ENCODE measurements at regions of chr11 and their contacts with region 1.

Region 1: DNA sequence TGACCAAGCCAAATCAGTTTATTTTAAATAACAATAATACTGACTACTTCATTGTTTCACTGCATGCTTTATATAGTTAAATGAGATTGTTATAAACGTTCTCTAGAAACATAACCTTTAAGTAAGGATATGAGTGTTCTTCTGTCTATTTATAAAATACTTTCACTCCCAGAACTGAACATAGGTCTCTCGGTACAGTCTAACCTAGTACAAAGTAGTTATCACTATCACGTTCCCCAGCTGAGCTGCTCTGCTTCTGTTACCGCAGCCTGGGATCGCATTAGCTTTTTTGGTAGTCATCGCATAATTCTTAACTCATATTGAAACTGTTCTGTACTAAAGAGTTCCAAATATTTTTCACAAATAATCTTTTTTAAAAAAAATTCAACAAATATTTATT is 143.6 kb downstream of the WNT11 start:
- DNase-seq: no peak

Region 2: DNA sequence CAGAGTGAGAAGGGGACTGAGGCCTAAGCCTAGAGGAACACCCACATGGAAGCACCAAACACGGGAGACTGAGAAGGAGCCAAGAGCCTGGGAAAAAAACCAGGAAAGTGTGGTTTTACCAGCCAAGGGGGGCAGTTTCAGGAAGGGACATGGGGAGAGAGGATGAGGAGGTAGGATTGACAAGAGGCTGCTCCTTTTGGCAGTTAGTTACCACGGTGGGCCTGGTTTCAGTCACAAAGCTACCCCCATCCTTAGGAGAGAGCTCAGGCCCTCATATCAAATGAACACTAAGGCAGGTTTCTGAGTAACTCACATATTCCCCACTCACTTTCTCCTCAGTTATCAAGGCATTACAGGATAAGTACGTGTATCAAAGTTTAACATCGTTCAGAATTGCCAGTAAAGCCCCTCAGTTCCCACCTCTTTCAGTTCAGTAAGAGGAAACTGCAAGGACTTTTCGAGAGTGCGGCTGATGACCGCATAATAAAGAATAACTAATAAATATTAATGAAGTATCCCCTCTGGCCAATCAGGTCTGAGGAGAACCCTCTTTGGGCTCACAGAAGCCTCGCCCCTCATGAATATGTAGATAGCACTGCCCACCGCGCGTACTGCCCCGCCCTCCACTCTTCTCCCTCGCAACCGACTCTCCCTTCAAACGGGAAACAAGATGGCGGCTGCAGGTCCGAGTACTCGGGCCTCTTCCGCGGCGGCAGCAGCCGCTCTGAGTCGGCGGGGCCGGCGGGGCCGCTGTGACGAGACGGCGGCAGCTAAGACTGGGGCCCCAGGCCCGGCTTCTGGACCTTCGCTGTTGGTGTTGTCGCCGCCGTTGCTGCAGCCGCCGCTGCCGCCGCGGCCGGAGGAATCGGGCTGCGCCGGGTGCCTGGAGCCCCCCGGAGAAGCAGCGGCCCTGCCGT is 1314.3 kb before region 1 on chr11 and contains the start of gene RNF169:
- intact Hi-C with region 1: loop called in 1 of 2 experiments (anchors 5 kb)
- DNase-seq: peak; percentile 98
- total RNA-seq, gene RNF169: 14.7 to 19.8 TPM

Region 3: DNA sequence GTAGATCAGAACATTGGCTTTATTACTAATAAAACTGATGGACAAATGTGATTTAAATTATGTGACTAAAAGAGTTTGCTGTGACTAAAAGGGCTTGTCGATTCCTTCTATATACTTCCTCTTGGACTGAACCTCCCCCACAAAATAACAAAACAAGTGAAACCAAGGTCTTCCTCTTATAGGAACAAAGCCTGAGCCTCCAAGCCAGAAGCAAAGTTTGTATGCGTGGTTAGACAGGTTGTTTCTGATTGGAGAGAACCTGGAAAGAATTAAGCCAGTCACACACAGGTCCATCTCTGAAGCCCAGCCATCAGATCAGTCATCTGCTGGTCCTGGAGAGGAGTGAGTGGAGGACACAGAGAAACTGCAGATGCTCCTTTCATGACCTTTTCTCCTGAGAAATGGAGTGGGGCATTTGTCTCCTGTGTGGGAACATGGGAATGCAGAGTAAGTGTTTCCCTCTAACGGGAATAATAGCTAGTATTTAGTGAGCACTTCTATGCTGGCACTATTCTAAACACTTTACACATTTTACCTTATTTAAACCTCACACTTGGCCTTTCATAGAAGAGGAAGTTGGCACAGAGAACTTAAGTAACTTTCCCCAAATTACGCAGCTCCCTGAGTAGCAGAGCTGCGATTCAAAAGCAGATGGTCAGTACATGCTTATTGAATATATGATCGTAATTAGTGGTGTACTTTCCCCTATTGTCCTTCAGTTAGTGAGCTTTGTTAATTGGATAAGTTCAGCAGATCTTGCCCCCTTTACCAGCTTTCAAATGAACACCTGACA is 170.6 kb before region 1 on chr11:
- intact Hi-C with region 1: no loop called
- DNase-seq: no peak

Region 4: DNA sequence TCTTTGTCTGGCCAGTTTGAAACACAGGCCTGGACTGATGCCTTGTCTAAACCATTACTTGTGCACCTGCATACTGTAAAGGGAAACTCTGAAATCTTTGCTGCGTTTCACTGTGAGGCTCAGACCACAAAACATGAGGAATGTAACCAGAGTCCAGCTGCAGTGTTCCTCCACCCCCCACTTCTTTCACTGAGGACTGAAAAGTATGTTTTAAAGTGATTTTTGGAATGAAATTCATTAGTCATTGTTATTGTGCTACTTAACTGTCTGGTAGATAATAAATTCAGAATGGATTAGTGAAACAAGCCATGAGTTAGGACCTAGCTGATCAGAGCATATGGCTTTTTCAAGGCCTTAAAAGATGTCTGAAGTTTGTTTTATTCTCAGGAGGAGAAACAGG is 37.7 kb before region 1 on chr11:
- intact Hi-C with region 1: no loop called
- DNase-seq: no peak

Region 5: GRCh38 chr11:76120513-76121101 is 57.9 kb after region 1 on chr11:
- intact Hi-C with region 1: no loop called
- DNase-seq: no peak

Region 6: DNA sequence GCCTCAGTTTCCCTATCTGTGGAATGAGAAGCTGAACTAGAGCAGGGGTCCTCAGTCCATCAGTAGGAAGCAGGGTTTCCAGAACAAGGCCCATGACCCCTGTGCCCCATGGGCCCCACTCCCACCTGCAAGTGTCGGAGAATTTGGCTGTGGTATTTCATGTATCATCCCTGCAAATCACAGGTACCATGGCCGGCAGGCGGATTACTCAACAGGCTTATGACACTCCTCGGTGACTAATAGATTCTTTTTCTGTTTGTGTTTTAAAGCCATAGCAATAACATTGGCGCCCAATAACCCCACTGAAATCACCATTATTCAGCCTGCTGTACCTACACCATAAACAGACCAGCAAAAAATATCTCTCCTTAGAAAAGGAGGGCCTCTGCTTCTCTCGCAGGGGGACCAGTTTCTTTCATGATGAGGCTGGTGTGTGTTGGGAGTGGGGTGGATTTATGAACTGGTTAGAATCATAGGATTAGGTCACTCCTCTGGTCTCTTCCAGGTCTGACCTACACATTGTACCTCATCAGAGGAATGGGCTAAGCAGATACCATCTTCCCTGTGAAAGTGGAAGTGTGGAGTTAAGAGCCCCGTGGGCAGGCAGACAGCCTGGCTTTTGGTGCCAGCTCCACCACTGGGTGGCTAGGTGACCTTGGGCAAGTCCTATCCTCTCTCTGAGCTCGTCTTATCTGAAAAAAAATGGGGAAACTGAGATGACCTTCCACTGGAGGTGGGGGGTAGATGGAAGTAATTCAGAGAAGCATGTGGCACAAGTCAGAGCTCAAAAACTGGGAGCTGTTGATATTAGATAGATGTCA is 203.7 kb after region 1 on chr11:
- intact Hi-C with region 1: no loop called
- DNase-seq: no peak

Measured in posterior vena cava (tissue), 2 donors.